Transverse colon (tissue), 4 donors: ENCODE measurements at regions of chr5 and their contacts with region 1.

Region 1: DNA sequence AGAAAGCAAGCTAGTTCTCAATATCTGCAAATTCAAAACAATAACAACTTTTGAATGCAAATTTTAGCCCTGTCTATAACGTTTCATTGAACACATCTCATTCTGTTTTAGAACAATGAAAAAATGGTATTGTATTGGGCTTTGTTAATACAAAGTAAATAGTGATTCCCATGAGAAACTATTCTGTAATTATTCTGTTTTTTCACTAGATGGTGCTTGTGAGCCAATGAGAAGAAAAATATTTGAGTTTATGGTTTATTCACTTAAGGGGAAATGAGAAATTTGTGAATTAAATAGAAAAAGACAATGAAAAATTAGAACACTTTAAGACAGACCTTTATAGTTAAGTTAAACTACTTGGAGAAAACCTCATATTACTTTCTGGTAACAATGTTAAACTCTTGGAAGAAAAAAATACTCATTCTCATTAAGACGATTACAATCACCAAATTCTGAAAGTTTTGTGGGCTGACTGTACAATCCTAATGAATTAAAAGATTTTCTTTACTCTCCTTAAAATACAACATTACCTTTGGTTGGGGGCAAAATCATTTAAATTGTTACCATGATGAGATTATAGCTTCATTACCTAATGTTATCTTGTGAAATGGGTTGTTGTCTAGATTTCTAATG is 127.0 kb downstream of the NNT start:
- DNase-seq: no peak
- H3K4me3 ChIP-seq: no peak overlapping the region
- H3K27ac ChIP-seq: no peak overlapping the region
- H3K4me1 ChIP-seq: no peaks in the 10 kb centered on the region
- H3K27me3 ChIP-seq: no peaks in the 10 kb centered on the region
- CTCF ChIP-seq: peak; percentile 26 to 49 (median 42)
- EP300 ChIP-seq: no peak
- POLR2A ChIP-seq: no peak

Region 2: GRCh38 chr5:44774279-44774880 is 1044.4 kb after region 1 on chr5:
- in situ Hi-C with region 1: loop called in 2 of 4 experiments (anchors 10 to 25 kb)
- intact Hi-C with region 1: no loop called
- DNase-seq: no peak
- H3K4me3 ChIP-seq: no peak overlapping the region
- H3K27ac ChIP-seq: no peak overlapping the region
- H3K4me1 ChIP-seq: no peaks in the 10 kb centered on the region
- H3K27me3 ChIP-seq: no peaks in the 10 kb centered on the region
- CTCF ChIP-seq: peak; percentile 27 to 41 (median 38)
- EP300 ChIP-seq: no peak
- POLR2A ChIP-seq: no peak

Region 3: GRCh38 chr5:44797841-44798240 is 1067.9 kb after region 1 on chr5:
- in situ Hi-C with region 1: loop called in 1 of 4 experiments (anchors 25 kb)
- intact Hi-C with region 1: no loop called
- DNase-seq: no peak
- H3K4me3 ChIP-seq: no peak overlapping the region
- H3K27ac ChIP-seq: no peak overlapping the region
- H3K4me1 ChIP-seq: no peaks in the 10 kb centered on the region
- H3K27me3 ChIP-seq: no peaks in the 10 kb centered on the region
- CTCF ChIP-seq: no peak
- EP300 ChIP-seq: no peak
- POLR2A ChIP-seq: no peak